Ovary (tissue), 10 donors: ENCODE measurements at regions of chr13 and their contacts with region 1.

Region 1: DNA sequence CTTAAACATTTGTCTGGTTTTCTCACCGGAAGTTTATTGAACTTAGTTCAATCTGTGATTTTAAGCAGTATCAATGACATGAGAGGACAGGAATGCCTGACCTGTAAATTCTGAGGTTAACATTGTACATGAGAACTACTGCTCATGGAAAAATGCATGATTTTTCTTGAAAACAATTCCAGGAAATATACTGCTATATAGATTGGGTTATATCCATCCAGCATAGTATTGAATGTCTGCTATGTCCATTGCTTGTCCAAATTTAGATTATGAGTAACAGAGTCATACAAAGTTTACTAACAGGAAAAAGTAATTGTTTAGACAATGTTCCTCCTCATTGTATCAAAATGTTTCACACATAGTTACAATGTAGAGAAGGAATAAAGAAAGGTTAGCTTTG is 606.8 kb downstream of the DACH1 start:
- DNase-seq: no peak
- H3K4me3 ChIP-seq: no peak overlapping the region
- H3K27ac ChIP-seq: no peak overlapping the region
- H3K4me1 ChIP-seq: no peaks in the 10 kb centered on the region
- H3K27me3 ChIP-seq: no peaks in the 10 kb centered on the region
- CTCF ChIP-seq: no peak
- EP300 ChIP-seq: no peak
- POLR2A ChIP-seq: no peak

Region 2: DNA sequence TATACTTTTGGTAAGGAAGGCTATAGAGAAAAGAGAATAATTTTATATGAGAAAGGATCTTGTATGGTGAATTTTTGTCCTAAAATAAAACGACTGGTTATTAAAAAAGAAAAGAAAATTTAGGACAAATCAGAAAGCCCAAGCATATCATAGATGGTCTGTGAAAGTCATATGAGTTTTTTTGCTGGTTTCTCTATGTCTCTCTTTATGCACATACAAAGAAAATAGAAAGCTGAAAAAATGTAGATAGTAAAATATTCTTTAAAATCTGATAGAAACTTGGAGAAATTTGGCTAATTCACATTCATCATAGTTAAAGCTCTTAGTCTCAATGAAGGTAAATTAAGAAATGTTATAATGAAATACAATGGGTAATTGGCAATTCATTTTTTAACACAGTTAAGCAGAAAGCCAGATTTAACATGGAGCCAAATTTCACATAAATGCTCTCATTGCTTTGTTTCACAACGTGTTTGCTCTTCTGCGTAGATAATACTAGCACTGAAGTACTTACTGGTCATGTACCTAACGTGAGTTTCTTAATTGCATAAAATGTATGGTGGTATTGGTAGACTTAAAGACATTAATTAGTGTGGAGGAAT is 1774.2 kb before region 1 on chr13:
- intact Hi-C with region 1: loop called in 1 of 4 experiments (anchors 5 kb)
- DNase-seq: no peak
- H3K4me3 ChIP-seq: no peak overlapping the region
- H3K27ac ChIP-seq: no peak overlapping the region
- H3K4me1 ChIP-seq: no peaks in the 10 kb centered on the region
- H3K27me3 ChIP-seq: no peaks in the 10 kb centered on the region
- CTCF ChIP-seq: no peak
- EP300 ChIP-seq: no peak
- POLR2A ChIP-seq: no peak

Region 3: DNA sequence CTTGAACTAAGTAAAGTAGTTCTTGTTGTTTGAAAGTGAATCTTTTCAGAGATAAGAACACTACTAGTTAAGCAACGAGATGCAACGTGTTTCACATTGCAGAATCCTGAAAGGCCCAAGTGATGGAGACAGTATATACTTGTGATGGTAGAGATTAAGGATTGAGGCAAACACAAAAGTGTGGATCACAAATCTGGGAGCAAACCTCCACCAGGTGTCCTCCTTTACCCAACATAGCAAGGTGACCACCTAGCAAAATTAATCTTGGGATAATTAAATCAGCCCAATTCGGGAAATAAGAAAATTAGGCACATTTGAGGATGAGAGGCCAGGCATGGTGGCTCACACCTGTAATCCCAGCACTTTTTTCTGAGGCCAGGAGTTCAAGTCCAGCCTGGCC is 42.9 kb after region 1 on chr13:
- intact Hi-C with region 1: no loop called
- DNase-seq: no peak
- H3K4me3 ChIP-seq: no peak overlapping the region
- H3K27ac ChIP-seq: no peak overlapping the region
- H3K4me1 ChIP-seq: no peaks in the 10 kb centered on the region
- H3K27me3 ChIP-seq: no peaks in the 10 kb centered on the region
- CTCF ChIP-seq: no peak
- EP300 ChIP-seq: no peak
- POLR2A ChIP-seq: no peak